HEK293T (cell line): ENCODE measurements at regions of chr1 and their contacts with region 1.

Region 1: GRCh38 chr1:210233216-210234020 is 822 bp downstream of the SERTAD4 start:
- DNase-seq: peak; percentile 54

Region 2: GRCh38 chr1:209627732-209628196 is 605.7 kb before region 1 on chr1:
- CTCF ChIA-PET with region 1: no interaction called
- POLR2A ChIA-PET with region 1: no interaction called
- DNase-seq: peak; percentile 89

Region 3: GRCh38 chr1:210222340-210223006 is 10.9 kb before region 1 on chr1:
- CTCF ChIA-PET with region 1: no interaction called
- POLR2A ChIA-PET with region 1: interaction called, 10 read pairs
- DNase-seq: peak; percentile 56